ENCODE measurements at regions of chr1 and their contacts with region 1.

Region 1: GRCh38 chr1:207997486-207998268 is 86.8 kb upstream of the CD34 start:
- DNase-seq: peak in 4 of 5 donors; percentile 20 to 36 (median 30)
- H3K4me3 ChIP-seq: no peak overlapping the region
- H3K4me3 Mint-ChIP-seq: no peak overlapping the region
- H3K27ac ChIP-seq: no peak overlapping the region
- H3K27ac Mint-ChIP-seq: no peak overlapping the region
- H3K4me1 ChIP-seq: no peaks in the 10 kb centered on the region
- H3K4me1 Mint-ChIP-seq: no peaks in the 10 kb centered on the region
- H3K27me3 ChIP-seq: no peaks in the 10 kb centered on the region
- H3K27me3 Mint-ChIP-seq: peaks cover 4% of the 10 kb centered on the region in 2 donors

Region 2: GRCh38 chr1:207985996-207986395 is 11.7 kb before region 1 on chr1:
- CTCF ChIA-PET with region 1: interaction called, 10 read pairs
- POLR2A ChIA-PET with region 1: no interaction called
- intact Hi-C with region 1: no loop called
- DNase-seq: no peak
- H3K4me3 ChIP-seq: no peak overlapping the region
- H3K4me3 Mint-ChIP-seq: no peak overlapping the region
- H3K27ac ChIP-seq: no peak overlapping the region
- H3K27ac Mint-ChIP-seq: no peak overlapping the region
- H3K4me1 ChIP-seq: no peaks in the 10 kb centered on the region
- H3K4me1 Mint-ChIP-seq: no peaks in the 10 kb centered on the region
- H3K27me3 ChIP-seq: no peaks in the 10 kb centered on the region
- H3K27me3 Mint-ChIP-seq: peaks cover 24 to 26% of the 10 kb centered on the region in 2 donors

Region 3: GRCh38 chr1:208007938-208008342 is 10.3 kb after region 1 on chr1:
- CTCF ChIA-PET with region 1: interaction called, 15 read pairs
- POLR2A ChIA-PET with region 1: no interaction called
- intact Hi-C with region 1: no loop called
- DNase-seq: no peak
- H3K4me3 ChIP-seq: no peak overlapping the region
- H3K4me3 Mint-ChIP-seq: no peak overlapping the region
- H3K27ac ChIP-seq: no peak overlapping the region
- H3K27ac Mint-ChIP-seq: no peak overlapping the region
- H3K4me1 ChIP-seq: no peaks in the 10 kb centered on the region
- H3K4me1 Mint-ChIP-seq: no peaks in the 10 kb centered on the region
- H3K27me3 ChIP-seq: no peaks in the 10 kb centered on the region
- H3K27me3 Mint-ChIP-seq: peaks cover 0 to 4% of the 10 kb centered on the region in 2 donors

Region 4: DNA sequence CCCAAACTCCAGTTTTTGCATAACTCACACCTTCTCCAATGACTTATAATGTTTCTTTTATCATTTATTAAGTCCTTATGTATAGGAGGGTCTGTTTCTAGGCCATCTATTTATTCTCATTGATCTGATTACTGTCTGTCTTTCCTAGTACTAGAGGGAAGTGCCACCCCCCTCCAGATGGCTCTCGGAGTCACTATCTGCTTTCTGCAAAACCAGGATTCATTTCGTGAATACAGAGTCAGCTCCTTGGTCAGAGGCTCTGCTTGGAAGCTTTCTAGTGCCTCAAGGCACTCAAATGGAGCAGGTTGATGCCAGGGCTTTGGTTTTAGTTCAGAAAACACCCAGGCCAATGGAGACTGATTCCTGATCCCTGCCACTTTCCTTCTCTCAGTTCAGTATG is 15.5 kb after region 1 on chr1:
- CTCF ChIA-PET with region 1: interaction called, 15 read pairs
- POLR2A ChIA-PET with region 1: no interaction called
- intact Hi-C with region 1: no loop called
- DNase-seq: no peak
- H3K4me3 ChIP-seq: no peak overlapping the region
- H3K4me3 Mint-ChIP-seq: no peak overlapping the region
- H3K27ac ChIP-seq: no peak overlapping the region
- H3K27ac Mint-ChIP-seq: no peak overlapping the region
- H3K4me1 ChIP-seq: no peaks in the 10 kb centered on the region
- H3K4me1 Mint-ChIP-seq: no peaks in the 10 kb centered on the region
- H3K27me3 ChIP-seq: no peaks in the 10 kb centered on the region
- H3K27me3 Mint-ChIP-seq: peaks cover 4 to 5% of the 10 kb centered on the region in 2 donors